ENCODE measurements at regions of chr3 and their contacts with region 1.

Region 1: GRCh38 chr3:100463002-100463401 is 29.4 kb upstream of the TMEM45A start:
- DNase-seq: peak; percentile 65
- CTCF ChIP-seq: peak; percentile 80

Region 2: DNA sequence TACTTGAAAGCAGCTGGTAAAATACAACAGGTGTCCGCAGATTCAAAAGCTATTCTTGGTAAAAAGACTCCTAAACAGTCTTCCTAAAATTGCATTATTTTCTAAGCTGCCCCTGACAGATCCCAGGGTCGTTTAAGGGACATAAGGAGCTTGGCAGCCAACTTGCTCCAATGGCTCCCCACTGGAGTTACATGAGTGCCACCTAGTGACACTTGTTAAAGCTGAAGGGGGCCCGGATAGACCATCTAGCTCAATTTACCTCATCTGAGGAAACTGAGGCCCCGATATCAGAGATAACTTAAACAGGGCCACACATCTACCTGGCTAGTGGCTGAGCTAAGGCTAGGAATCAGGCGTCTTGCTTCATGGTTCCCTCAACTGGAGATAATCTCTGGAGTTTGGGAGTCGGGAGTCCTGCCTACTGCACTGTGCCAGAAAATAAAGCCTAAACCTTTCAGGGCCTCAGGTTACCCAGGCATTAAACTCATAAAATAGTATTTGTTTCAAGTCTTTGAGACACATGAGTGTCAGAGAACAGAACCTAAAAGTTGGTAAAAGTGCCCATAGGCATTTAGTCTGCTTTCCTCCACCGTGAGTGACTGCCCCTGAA is 208.7 kb before region 1 on chr3:
- CTCF ChIA-PET with region 1: no interaction called
- POLR2A ChIA-PET with region 1: no interaction called
- DNase-seq: peak; percentile 55
- CTCF ChIP-seq: peak; percentile 66

Region 3: GRCh38 chr3:100437721-100438622 is 25.0 kb before region 1 on chr3:
- CTCF ChIA-PET with region 1: interaction called, 35 read pairs
- POLR2A ChIA-PET with region 1: no interaction called
- DNase-seq: no peak
- CTCF ChIP-seq: no peak

Region 4: DNA sequence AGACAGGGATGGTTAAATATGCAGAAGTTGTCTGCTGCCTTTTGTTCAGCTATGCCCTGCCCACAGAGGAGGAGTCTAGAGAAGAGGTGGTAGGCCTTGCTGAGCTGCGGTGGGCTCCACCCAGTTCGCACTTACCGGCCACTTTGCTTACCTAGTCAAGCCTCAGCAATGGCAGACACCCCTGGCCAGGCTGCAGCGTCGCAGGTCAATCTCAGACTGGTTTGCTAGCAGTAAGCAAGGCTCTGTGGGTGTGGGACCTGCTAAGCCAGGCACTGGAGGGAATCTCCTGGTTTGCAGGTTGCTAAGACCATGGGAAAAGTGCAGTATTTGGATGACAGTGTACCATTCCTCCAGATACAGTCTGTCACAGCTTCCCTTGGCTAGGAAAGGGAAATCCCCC is 17.1 kb after region 1 on chr3:
- CTCF ChIA-PET with region 1: interaction called, 28 read pairs
- POLR2A ChIA-PET with region 1: no interaction called
- DNase-seq: no peak
- CTCF ChIP-seq: no peak

Region 5: DNA sequence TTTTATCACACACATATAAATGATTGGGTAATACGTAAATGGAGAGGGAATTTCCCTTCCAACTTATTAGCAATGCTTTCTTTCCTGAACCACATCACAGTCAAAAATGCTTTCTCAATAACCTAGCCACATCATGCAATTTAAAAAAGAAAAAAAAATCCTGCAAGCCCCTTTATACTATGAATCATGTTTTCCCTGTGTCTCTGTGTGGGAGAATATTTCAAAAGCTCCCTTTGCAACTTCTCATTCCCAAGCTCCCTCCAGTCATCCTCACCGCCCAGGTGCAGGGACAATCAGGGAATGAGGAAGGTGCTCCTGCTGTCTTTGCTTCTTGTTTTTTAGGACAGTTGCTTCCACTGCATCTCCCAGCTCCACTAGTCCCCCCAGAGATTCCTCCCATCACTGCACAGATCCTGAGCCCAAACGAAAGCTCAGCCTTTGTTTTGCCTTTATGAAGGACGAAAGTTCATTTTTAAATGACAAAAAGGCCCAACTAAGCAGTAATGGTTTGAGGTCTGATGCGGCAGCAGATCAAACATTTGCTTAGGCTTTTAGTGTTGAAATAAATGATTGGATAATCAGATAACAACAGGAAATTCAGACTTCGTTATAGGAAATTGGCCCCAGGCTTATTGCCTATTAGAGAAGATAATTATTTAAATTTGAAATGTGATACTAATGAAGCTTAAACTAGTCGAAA is 98.6 kb after region 1 on chr3:
- CTCF ChIA-PET with region 1: interaction called, 18 read pairs
- POLR2A ChIA-PET with region 1: no interaction called
- DNase-seq: no peak
- CTCF ChIP-seq: no peak

Region 6: GRCh38 chr3:100603469-100603868 is 140.5 kb after region 1 on chr3:
- CTCF ChIA-PET with region 1: interaction called, 21 read pairs
- POLR2A ChIA-PET with region 1: no interaction called
- DNase-seq: peak; percentile 18
- CTCF ChIP-seq: peak; percentile 36

Region 7: DNA sequence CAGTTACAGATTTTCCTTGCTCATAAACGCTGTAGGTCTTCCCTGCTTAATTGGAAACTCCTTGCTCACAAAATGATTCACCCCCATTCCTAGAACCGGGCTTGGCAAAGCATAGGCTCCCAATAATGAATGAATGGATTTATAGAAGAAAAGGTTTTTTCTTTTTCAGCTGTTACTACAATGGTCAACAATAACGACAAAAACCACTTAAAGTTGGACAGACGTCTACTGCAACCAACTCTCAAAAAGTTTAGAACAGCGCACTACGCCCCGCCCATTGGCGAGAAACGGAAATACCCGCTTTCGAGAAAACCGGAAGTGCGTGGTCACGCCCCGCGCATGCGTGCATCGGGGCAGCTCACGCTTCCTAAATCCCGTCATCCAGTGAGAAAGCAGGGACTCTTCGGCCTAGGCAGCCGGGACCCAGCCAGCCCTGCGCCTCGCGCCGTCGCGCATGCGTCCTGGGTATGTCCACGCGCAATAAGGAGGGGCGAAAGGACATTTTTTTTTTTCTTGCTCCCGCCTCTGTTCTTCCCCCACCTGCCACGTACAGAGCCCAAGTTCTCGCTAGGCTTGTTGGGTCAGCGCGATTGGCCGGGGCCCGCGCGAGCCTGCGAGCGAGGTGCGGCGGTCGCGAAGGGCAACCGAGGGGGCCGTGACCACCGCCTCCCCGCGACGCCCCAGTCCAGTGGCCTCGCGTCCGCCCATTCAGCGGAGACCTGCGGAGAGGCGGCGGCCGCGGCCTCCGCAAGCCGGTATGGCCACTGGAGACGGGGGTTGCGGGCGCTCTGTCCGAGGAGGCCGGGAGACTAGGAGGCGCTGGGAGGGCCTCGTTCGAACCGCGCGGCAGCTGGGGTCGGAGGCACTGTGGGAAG is 246.2 kb after region 1 on chr3 and contains the start of gene TFG:
- CTCF ChIA-PET with region 1: interaction called, 11 read pairs
- POLR2A ChIA-PET with region 1: no interaction called
- DNase-seq: peak; percentile 99
- CTCF ChIP-seq: no peak